ENCODE measurements at regions of chr21 and their contacts with region 1.

Region 1: GRCh38 chr21:34888569-34889319 is 160.4 kb downstream of the RUNX1 start:
- DNase-seq: peak; percentile 81
- H3K4me3 Mint-ChIP-seq: peak overlapping the region; percentile 98
- H3K27ac Mint-ChIP-seq: peak overlapping the region; percentile 100
- H3K4me1 Mint-ChIP-seq: peaks cover 36% of the 10 kb centered on the region
- H3K27me3 Mint-ChIP-seq: no peaks in the 10 kb centered on the region

Region 2: GRCh38 chr21:34933609-34934335 is 45.0 kb after region 1 on chr21:
- intact Hi-C with region 1: loop called (anchors 2 kb)
- DNase-seq: peak; percentile 37
- H3K4me3 Mint-ChIP-seq: peak overlapping the region; percentile 72
- H3K27ac Mint-ChIP-seq: peak overlapping the region; percentile 91
- H3K4me1 Mint-ChIP-seq: peaks cover 83% of the 10 kb centered on the region
- H3K27me3 Mint-ChIP-seq: no peaks in the 10 kb centered on the region

Region 3: DNA sequence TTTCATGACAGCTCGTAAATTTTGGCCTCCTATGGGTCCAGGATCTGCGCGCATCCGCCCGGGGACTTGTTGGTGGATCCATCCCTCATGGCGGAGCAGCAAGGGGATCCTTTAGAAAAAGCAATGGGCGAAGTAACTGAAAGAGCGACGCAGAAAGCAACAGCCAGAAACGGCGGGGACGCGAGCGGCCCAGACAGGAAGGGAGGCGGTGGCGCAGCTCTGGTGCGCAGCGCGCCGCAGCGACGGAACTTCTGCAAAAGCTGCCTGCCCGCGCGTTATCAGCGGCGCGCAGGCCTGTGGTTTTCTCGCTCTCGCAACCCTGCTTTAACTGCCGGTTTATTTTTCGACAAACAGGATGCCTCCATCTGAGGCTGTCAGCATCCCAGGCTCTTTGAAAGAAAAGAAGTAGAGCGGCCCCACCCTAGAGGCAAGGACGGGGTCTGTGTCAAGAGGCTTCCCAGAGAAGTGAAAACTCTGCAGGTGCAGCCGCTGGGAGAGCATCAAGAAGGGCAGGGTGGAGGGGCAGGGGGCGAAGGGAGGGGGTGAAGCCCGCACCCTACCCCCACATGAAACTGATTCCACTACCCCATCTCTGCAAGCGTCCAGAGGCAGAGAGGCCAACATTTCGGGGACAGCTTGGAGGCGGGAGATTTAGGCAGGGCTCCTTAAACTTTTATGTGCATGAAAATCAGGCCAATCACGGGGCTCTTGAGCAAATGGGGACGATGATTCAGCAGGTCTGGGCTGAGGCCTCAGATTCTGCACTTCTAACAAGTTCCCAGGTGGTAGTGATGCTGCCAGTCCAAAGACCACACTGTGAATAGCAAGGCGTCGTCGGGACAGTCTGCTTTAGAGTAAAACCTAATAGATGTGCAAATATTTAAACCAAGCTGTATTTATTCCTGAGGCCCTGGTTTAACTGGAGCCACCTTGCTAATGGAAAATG is 138.1 kb after region 1 on chr21:
- intact Hi-C with region 1: loop called (anchors 1 kb)
- DNase-seq: peak; percentile 87
- H3K4me3 Mint-ChIP-seq: peak overlapping the region; percentile 90
- H3K27ac Mint-ChIP-seq: peak overlapping the region; percentile 100
- H3K4me1 Mint-ChIP-seq: peaks cover 86% of the 10 kb centered on the region
- H3K27me3 Mint-ChIP-seq: no peaks in the 10 kb centered on the region

Region 4: GRCh38 chr21:35039595-35040289 is 151.0 kb after region 1 on chr21:
- intact Hi-C with region 1: no loop called
- DNase-seq: no peak
- H3K4me3 Mint-ChIP-seq: peak overlapping the region; percentile 52
- H3K27ac Mint-ChIP-seq: peak overlapping the region; percentile 78
- H3K4me1 Mint-ChIP-seq: peaks cover 93% of the 10 kb centered on the region
- H3K27me3 Mint-ChIP-seq: no peaks in the 10 kb centered on the region

Region 5: DNA sequence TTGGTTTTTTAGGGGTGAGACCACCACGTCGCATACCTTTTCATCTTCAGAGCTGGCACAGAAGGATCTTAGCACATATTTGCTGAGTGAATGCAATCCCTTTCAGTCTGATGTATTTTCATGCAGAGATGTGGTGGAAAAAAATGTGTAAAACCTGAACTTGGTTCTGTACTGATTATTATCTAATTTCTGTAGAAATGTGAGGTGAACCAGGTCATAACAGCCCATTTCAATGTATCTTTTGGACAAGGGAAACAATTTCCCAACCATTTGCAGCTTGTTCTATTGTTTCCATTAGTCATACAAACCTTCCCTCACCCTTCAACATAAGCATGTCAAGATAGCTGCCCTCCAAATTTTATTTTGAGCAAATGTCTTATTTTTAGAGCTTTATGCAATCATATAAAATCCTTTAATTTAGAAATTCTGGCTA is 207.1 kb after region 1 on chr21:
- intact Hi-C with region 1: loop called (anchors 1 kb)
- DNase-seq: no peak
- H3K4me3 Mint-ChIP-seq: no peak overlapping the region
- H3K27ac Mint-ChIP-seq: peak overlapping the region; percentile 93
- H3K4me1 Mint-ChIP-seq: peaks cover 65% of the 10 kb centered on the region
- H3K27me3 Mint-ChIP-seq: no peaks in the 10 kb centered on the region

Region 6: GRCh38 chr21:35342440-35342839 is 453.7 kb after region 1 on chr21:
- intact Hi-C with region 1: loop called (anchors 2 kb)
- DNase-seq: no peak
- H3K4me3 Mint-ChIP-seq: peak overlapping the region; percentile 69
- H3K27ac Mint-ChIP-seq: peak overlapping the region; percentile 98
- H3K4me1 Mint-ChIP-seq: peaks cover 63% of the 10 kb centered on the region
- H3K27me3 Mint-ChIP-seq: no peaks in the 10 kb centered on the region